Aorta (tissue), 5 donors: ENCODE measurements at regions of chr5 and their contacts with region 1.

Region 1: GRCh38 chr5:52380385-52380784 is 407.3 kb upstream of the ITGA1 start:
- DNase-seq: no peak
- ATAC-seq: no peak
- H3K4me3 ChIP-seq: no peak overlapping the region
- H3K27ac ChIP-seq: no peak overlapping the region
- H3K4me1 ChIP-seq: no peaks in the 10 kb centered on the region
- H3K27me3 ChIP-seq: no peaks in the 10 kb centered on the region

Region 2: GRCh38 chr5:52202256-52202655 is 178.1 kb before region 1 on chr5:
- intact Hi-C with region 1: loop called in 1 of 2 experiments (anchors 5 kb)
- DNase-seq: peak in 1 of 2 donors; percentile 45
- ATAC-seq: no peak
- H3K4me3 ChIP-seq: no peak overlapping the region
- H3K27ac ChIP-seq: no peak overlapping the region
- H3K4me1 ChIP-seq: no peaks in the 10 kb centered on the region
- H3K27me3 ChIP-seq: no peaks in the 10 kb centered on the region

Region 3: DNA sequence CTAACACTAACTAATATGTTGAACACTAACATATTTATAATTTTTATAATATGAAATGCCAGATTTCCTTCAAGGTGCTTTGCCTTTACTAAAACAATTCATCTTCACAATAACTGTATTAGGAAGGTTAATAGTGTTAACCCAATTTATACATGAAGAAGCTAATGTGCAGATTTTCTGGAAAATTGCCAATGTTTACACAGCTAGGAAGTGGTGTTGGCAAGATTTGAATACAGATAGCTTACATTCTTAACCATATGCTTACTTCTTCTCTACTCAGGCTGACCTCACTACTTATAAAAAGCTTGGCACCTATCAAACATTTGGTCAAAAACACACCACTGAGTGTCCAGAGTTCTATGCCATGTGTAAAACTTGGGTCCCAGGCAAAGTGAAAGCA is 38.0 kb before region 1 on chr5:
- intact Hi-C with region 1: no loop called
- DNase-seq: no peak
- ATAC-seq: no peak
- H3K4me3 ChIP-seq: no peak overlapping the region
- H3K27ac ChIP-seq: no peak overlapping the region
- H3K4me1 ChIP-seq: no peaks in the 10 kb centered on the region
- H3K27me3 ChIP-seq: no peaks in the 10 kb centered on the region